ENCODE measurements at regions of chrX and their contacts with region 1.

Region 1: GRCh38 chrX:104098151-104098808 is 14.0 kb upstream of the ZCCHC18 start:
- DNase-seq: no peak
- ATAC-seq: peak; percentile 92
- H3K4me3 ChIP-seq: no peak overlapping the region
- H3K27ac ChIP-seq: no peak overlapping the region
- H3K4me1 ChIP-seq: no peaks in the 10 kb centered on the region
- H3K27me3 ChIP-seq: no peaks in the 10 kb centered on the region
- CTCF ChIP-seq: peak; percentile 57 to 66 (median 64); a peak in 5 of 6 replicates
- EP300 ChIP-seq: no peak
- POLR2A ChIP-seq: no peak
- RAD21 ChIP-seq: peak; percentile 70

Region 2: GRCh38 chrX:104113222-104113965 is 15.1 kb after region 1 on chrX:
- CTCF ChIA-PET with region 1: interaction called, 17 read pairs
- POLR2A ChIA-PET with region 1: interaction called, 3 read pairs
- RAD21 ChIA-PET with region 1: interaction called, 19 read pairs
- SMC1A ChIA-PET with region 1: interaction called, 19 read pairs
- in situ Hi-C with region 1: no loop called
- intact Hi-C with region 1: loop called (anchors 1 kb)
- DNase-seq: no peak
- ATAC-seq: peak; percentile 72
- H3K4me3 ChIP-seq: peak overlapping the region; percentile 61; the same call in 1 of the 2 replicates
- H3K27ac ChIP-seq: no peak overlapping the region
- H3K4me1 ChIP-seq: no peaks in the 10 kb centered on the region
- H3K27me3 ChIP-seq: no peaks in the 10 kb centered on the region
- CTCF ChIP-seq: peak; percentile 47 to 55 (median 52); a peak in 5 of 6 replicates
- EP300 ChIP-seq: no peak
- POLR2A ChIP-seq: no peak
- RAD21 ChIP-seq: peak; percentile 51

Region 3: DNA sequence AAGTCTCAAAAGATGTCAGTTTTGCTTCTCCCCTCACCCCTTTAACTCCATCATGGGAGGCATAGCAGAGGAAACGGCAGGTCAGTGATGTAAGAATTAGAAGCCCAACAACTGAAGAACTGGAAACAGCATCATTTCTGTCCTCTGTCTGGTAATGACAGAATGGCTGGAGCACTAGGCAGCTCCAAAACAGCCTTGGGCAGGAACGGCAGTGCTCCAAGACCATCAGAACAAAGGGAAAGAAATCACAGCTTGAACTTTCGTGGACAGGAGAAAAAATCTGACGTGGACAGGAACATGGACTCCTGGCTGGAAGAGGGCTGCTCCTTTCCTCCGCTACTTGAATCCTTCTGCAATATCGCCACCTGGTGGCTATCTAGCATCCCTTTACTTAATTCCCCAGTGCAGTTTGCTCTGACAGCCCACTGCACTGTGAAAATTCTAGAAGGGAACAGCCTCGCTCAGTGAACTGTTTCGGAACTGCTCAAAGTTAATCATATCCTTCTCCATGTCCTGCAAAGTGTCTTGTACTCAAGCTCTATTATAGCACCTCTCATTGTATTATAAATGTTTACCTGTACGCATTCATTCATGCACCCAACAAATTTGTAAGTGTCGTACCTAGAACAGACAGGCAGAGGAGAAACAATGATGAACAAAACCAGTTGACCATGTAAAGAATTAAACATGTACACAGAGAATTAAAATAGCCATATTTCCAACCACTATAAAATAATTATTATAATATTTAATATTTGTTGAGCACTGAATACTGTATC is 38.1 kb after region 1 on chrX:
- CTCF ChIA-PET with region 1: interaction called, 41 read pairs
- POLR2A ChIA-PET with region 1: no interaction called
- RAD21 ChIA-PET with region 1: interaction called, 5 read pairs
- SMC1A ChIA-PET with region 1: interaction called, 14 read pairs
- in situ Hi-C with region 1: no loop called
- intact Hi-C with region 1: loop called (anchors 1 kb)
- DNase-seq: peak; percentile 35
- ATAC-seq: peak; percentile 99
- H3K4me3 ChIP-seq: no peak overlapping the region
- H3K27ac ChIP-seq: no peak overlapping the region
- H3K4me1 ChIP-seq: no peaks in the 10 kb centered on the region
- H3K27me3 ChIP-seq: no peaks in the 10 kb centered on the region
- CTCF ChIP-seq: peak; percentile 71 to 77 (median 71)
- EP300 ChIP-seq: no peak
- POLR2A ChIP-seq: no peak
- RAD21 ChIP-seq: peak; percentile 83